IMR-90 (cell line): ENCODE measurements at regions of chr11 and their contacts with region 1.

Region 1: DNA sequence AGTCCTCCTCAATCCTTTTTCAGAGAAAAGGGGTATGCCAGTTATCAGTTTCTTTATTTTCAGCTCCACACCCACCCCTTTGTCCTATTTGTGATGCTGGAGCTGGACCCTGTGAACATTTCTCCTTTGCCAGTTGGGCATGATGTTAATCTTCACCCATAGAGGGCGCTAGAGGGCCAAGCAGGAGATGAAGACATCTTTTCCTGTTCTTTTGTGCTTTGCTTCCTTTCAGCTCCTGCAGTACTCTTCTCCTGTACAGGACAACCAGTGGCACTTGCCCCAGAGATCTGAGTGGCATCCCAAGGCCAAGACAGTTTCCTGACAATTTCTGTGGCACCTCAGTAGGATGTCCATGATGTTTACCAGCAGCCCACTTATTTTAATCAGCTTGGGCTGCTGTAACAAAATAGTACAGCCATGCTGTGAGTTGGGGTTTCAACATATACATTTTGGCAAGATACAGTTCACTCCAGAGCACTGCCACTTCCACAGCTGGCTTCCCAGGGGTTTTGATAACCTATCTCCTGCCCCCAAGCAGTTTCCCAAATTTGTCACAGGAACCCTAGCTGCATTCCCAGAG is 4.6 kb downstream of the SAA2 start:
- DNase-seq: peak; percentile 72
- ATAC-seq: peak; percentile 81
- H3K4me3 ChIP-seq: no peak overlapping the region
- H3K27ac ChIP-seq: no peak overlapping the region
- H3K4me1 ChIP-seq: no peaks in the 10 kb centered on the region
- H3K27me3 ChIP-seq: peaks cover 6% of the 10 kb centered on the region
- CTCF ChIP-seq: peak; percentile 83
- POLR2A ChIP-seq: no peak
- RAD21 ChIP-seq: peak; percentile 80

Region 2: DNA sequence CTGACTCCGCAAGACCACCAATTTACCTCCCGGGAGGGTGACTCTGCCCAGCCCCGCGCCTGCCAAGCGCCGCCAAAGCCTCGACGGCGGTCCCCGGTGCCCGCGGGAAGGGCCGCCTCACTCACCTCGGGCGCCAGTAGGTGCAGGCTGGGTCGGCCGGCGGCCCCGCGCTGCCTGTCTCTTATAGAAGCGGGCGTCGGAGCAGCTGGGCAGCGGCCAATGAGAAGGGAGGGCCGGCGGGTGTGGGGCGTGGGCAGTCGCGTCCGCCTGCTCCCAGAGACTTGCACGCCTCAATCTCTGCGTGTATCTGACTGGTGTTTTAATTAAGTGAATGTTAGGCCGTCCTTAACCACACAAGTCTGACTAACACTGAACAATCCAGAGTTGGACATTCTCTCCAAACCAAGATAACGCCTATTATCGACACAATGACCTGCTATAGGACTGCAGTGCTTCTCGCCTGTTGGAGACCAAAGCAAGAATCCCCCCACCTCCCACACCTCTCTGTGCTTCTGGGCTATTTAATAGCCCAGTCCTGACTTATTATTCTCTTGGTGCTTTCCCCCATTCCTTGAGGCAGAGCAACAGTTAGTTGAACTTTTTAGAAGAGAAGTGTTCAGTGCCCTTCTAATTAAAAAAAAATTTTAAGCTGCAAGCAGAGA is 197.6 kb before region 1 on chr11 and contains the start of gene TPH1:
- CTCF ChIA-PET with region 1: no interaction called
- POLR2A ChIA-PET with region 1: no interaction called
- dilution Hi-C with region 1: no loop called
- in situ Hi-C with region 1: no loop called
- intact Hi-C with region 1: no loop called
- DNase-seq: peak; percentile 36
- ATAC-seq: peak; percentile 82
- H3K4me3 ChIP-seq: no peak within 1 kb of the TSS
- H3K27ac ChIP-seq: no peak within 1 kb of the TSS
- H3K4me1 ChIP-seq: no peaks in the 10 kb centered on the region
- H3K27me3 ChIP-seq: peaks cover 17% of the 10 kb centered on the region
- CTCF ChIP-seq: no peak
- POLR2A ChIP-seq: no peak
- RAD21 ChIP-seq: no peak
- total RNA-seq, gene TPH1: under 0.01 TPM in 2 replicates

Region 3: DNA sequence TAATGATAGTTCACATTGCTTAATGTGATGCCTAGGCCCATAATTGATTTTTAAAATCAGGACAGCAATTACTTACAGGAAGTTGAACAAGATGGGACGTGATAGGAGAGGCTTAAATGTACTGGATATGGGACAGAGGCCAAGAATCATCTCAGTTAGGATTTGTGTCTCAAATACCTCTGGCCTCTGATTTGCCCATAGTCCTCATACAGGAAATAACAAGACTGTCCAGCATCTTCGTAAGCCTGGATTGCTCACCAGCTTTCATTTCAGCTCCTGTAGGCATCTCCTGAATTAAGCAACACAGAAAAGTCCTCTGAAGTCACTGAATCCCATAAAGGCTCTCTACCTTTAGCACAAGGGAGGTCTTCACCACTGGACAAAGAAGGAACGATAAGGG is 111.5 kb before region 1 on chr11 and contains the start of gene MRGPRX3:
- CTCF ChIA-PET with region 1: no interaction called
- POLR2A ChIA-PET with region 1: no interaction called
- dilution Hi-C with region 1: no loop called
- in situ Hi-C with region 1: no loop called
- intact Hi-C with region 1: no loop called
- DNase-seq: no peak
- ATAC-seq: no peak
- H3K4me3 ChIP-seq: no peak within 1 kb of the TSS
- H3K27ac ChIP-seq: no peak within 1 kb of the TSS
- H3K4me1 ChIP-seq: no peaks in the 10 kb centered on the region
- H3K27me3 ChIP-seq: no peaks in the 10 kb centered on the region; the same call in 1 of the 2 replicates
- CTCF ChIP-seq: no peak
- POLR2A ChIP-seq: no peak
- RAD21 ChIP-seq: no peak
- total RNA-seq, gene MRGPRX3: not detected in 2 replicates

Region 4: GRCh38 chr11:18526521-18527296 is 282.8 kb after region 1 on chr11 and contains the start of gene TSG101:
- CTCF ChIA-PET with region 1: no interaction called
- POLR2A ChIA-PET with region 1: no interaction called
- dilution Hi-C with region 1: no loop called
- in situ Hi-C with region 1: no loop called
- intact Hi-C with region 1: loop called (anchors 5 kb)
- DNase-seq: peak; percentile 92
- ATAC-seq: peak; percentile 98
- H3K4me3 ChIP-seq: peak within 1 kb of the TSS; percentile 95
- H3K27ac ChIP-seq: peak within 1 kb of the TSS; percentile 92
- H3K4me1 ChIP-seq: peaks cover 2% of the 10 kb centered on the region
- H3K27me3 ChIP-seq: no peaks in the 10 kb centered on the region
- CTCF ChIP-seq: no peak
- POLR2A ChIP-seq: peak; percentile 87
- RAD21 ChIP-seq: no peak; the same call in 1 of the 2 replicates
- total RNA-seq, gene TSG101: 67.4 and 76.4 TPM in 2 replicates

Region 5: GRCh38 chr11:18650859-18651557 is 407.1 kb after region 1 on chr11:
- CTCF ChIA-PET with region 1: interaction called, 4 read pairs
- POLR2A ChIA-PET with region 1: no interaction called
- dilution Hi-C with region 1: no loop called
- in situ Hi-C with region 1: no loop called
- intact Hi-C with region 1: loop called (anchors 2 kb)
- DNase-seq: peak; percentile 69
- ATAC-seq: peak; percentile 83
- H3K4me3 ChIP-seq: no peak overlapping the region
- H3K27ac ChIP-seq: no peak overlapping the region
- H3K4me1 ChIP-seq: no peaks in the 10 kb centered on the region
- H3K27me3 ChIP-seq: no peaks in the 10 kb centered on the region
- CTCF ChIP-seq: peak; percentile 69
- POLR2A ChIP-seq: no peak
- RAD21 ChIP-seq: peak; percentile 75